BJ (cell line): ENCODE measurements at regions of chr7 and their contacts with region 1.

Region 1: DNA sequence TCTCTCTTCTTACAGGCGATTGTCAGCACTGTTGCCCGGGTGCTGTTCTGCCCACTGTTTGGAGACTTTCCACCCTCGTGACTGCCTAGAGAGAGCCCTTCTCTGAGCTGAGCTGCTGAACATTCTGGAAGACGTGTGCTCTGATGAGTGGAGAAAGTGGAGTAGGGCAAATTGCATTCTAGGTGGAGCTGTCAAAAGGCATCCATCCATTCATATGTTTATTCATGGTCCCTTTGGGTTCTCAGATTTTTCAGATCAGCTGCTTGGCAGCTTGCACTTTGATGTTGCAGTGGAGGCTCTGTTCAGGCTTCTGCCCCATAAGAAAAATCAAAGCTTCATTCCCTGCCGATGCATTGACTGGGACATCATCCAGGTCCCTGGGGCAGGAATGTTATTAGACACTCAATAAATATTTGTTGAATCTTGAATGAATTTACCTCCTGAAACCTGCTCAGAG is 120.7 kb upstream of the EEPD1 start:
- DNase-seq: no peak
- H3K4me3 ChIP-seq: no peak overlapping the region
- H3K27me3 ChIP-seq: peaks cover 3% of the 10 kb centered on the region; the same call in 1 of the 2 replicates
- CTCF ChIP-seq: no peak

Region 2: DNA sequence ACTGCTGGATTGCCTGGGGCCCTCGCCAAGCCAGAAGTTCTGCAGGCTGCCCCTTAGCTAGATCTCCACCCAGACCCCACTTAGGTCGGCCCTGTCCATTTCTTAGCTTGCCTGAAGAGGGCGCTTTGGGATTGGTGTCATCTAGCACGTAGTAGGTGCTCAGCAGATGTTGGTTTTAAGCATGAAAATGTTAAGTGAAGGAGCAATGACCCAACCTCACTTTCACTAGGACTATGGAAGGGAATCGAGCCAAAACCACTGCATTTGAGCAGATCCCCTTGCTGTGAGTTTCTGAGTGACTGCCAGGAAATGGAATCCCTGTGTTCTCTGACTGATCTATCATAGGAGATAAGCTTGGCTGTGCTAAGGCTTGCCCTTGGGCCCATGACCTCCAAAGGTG is 11.0 kb before region 1 on chr7:
- CTCF ChIA-PET with region 1: interaction called, 14 read pairs
- POLR2A ChIA-PET with region 1: no interaction called
- DNase-seq: no peak
- H3K4me3 ChIP-seq: no peak overlapping the region
- H3K27me3 ChIP-seq: no peaks in the 10 kb centered on the region
- CTCF ChIP-seq: peak; percentile 48

Region 3: GRCh38 chr7:36473454-36474282 is 441.3 kb after region 1 on chr7:
- CTCF ChIA-PET with region 1: no interaction called
- POLR2A ChIA-PET with region 1: no interaction called
- DNase-seq: no peak
- H3K4me3 ChIP-seq: no peak overlapping the region
- H3K27me3 ChIP-seq: no peaks in the 10 kb centered on the region
- CTCF ChIP-seq: peak; percentile 50